Activated CD4-positive, alpha-beta T cell treated with anti-CD3 and anti-CD28 coated beads, Interleukin-2, amount 10 ng/mL, durations not matched to agents 24 days and 14 days (primary cell): ENCODE measurements at regions of chr14 and their contacts with region 1.

Region 1: DNA sequence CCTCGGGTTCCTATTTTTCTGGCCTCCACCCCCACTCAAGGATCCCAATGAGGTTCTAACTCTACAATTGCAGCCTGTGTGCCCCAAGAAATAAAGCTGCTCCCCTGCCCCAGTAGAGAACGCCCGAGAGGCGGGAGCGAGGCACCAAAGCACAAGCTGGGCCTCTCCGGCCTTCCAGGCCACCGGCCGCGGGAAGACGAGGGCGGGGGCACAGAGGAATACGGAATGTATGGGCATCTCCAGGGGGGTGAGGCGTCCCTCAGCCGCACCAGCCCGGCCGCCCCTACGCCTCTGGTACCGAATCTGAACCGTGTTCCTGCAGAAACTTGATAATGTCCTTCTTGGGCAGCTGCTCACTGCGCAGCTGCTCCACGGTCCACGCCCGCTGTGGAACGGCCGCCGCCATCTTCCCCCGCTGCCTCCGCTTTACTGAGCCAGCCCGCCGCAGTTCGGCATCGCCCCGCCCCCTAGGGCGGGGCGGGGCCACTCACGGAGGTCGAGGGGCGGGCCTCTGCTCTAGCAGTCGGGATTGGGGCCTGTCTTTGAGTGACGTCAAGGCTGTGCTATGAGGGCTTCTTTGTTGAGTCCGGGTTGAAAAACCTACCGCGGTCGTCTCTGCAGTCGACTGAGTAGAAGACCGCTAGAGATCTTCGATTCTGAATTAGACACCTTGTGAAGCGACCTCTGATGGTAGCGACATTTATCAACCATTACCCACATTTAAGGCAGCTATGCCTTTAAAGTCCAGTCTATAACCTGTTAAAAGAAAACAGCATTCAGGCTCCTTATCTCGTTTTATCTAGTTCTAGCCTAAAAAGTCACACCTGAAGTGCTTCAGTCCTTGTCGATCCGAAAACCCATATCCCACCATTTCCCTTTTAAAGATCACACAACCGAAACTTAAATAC is at the start of gene FKBP3:
- DNase-seq: peak; percentile 97
- H3K4me3 Mint-ChIP-seq: peak within 1 kb of the TSS; percentile 98
- H3K27ac Mint-ChIP-seq: peak within 1 kb of the TSS; percentile 96
- H3K4me1 Mint-ChIP-seq: peaks cover 30% of the 10 kb centered on the region
- H3K27me3 Mint-ChIP-seq: no peaks in the 10 kb centered on the region
- total RNA-seq, gene FKBP3: 62.4 and 65.4 TPM in 2 replicates

Region 2: DNA sequence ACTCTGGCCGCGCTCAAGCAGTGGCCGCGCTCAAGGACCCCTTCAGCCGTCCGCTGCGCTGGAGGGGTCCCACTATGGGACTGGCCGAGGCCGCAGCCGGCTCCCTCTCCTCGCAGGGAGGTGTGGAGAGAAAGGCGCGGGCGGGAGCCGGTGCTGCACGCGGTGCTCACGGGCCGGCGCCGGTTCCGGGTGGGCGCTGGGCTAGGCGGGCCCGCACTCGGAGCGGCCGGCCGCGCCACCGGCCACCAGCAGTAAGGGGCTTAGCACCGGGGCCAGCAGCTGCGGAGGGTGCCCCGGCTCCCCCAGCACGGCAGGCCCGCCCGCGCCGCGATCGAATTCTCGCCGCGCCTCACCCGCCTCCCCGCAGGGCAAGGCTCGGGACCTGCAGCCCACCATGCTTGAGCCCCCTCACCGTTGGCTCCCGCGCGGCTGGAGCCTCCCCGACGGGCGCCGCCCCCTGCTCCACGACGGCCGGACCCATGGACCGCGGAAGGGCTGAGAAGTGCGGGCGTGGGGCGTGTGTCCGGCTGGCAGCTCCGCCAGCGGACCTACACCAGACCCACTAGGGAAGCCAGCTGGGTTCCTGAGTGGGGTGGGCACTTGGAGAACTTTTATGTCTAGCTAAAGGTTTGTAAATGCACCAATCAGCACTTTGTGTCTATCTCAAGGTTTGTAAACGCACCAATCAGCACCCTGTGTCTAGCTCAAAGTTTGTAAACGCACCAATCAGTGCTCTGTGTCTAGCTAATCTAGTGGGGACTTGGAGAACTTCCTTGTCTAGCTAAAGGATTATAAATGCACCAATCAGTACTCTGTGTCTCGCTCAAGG is 222.1 kb before region 1 on chr14:
- intact Hi-C with region 1: loop called (anchors 5 kb)
- DNase-seq: no peak
- H3K4me3 Mint-ChIP-seq: peak overlapping the region; percentile 31
- H3K27ac Mint-ChIP-seq: no peak overlapping the region
- H3K4me1 Mint-ChIP-seq: no peaks in the 10 kb centered on the region
- H3K27me3 Mint-ChIP-seq: peaks cover 40% of the 10 kb centered on the region

Region 3: DNA sequence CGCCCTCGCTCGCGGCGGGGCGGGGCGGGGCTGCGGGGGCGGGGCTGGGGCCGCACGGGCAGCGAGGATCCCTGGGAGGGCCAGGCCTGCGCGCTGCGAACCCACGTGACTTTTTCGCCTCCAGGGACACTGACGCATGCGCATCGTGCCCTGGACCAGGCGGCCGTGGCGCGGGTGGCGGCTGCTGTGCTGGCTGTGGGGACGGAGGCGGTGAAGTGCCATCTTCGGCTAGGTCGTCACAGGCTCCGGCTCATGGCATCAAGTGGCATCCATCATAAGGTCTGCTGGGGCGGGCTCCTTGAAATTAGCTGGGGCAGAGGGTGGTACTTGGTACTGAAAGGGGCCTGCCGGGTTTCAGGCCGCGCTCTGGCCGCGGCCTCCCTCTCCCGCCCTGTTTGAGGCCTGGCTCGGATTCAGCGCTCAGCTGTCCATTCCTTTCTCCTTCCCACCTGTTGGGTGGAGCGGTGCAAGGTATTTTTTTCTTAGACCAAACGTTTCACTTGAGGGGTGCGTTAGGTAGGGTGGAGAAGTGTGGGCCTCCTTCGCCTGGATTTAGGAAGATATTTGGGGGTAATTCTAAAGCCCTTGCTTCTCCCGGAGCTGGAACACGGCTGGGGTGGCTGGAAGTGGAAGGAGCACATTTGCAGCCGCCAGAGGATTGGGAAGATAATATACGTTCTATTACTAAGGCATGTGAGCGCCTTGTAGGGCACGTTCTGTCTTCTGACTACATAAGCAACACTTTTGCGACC is 50.2 kb before region 1 on chr14 and contains the start of gene PRPF39:
- intact Hi-C with region 1: loop called (anchors 1 kb)
- DNase-seq: peak; percentile 99
- H3K4me3 Mint-ChIP-seq: peak within 1 kb of the TSS; percentile 98
- H3K27ac Mint-ChIP-seq: peak within 1 kb of the TSS; percentile 98
- H3K4me1 Mint-ChIP-seq: peaks cover 35% of the 10 kb centered on the region
- H3K27me3 Mint-ChIP-seq: no peaks in the 10 kb centered on the region
- total RNA-seq, gene PRPF39: 48.1 and 50.5 TPM in 2 replicates

Region 4: DNA sequence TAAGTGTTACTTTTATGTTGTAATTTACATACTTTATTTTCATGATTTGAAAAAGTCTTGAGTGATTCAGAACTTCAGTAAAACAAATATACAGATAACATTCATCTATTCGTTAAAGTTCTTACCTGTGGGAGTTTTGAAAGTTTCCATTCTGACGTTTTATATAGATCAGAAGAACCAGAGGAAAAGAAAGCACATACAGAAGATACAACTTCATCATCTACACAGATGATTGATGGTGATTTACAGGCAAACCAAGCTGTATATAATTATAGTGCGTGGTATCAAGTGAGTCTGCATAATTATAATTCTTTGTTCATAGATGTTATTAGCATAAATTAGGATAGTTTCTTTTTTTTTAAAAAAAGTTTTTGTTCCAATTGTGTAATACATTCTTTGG is 20.0 kb before region 1 on chr14:
- intact Hi-C with region 1: loop called (anchors 1 kb)
- DNase-seq: no peak
- H3K4me3 Mint-ChIP-seq: no peak overlapping the region
- H3K27ac Mint-ChIP-seq: peak overlapping the region; percentile 72
- H3K4me1 Mint-ChIP-seq: peaks cover 10% of the 10 kb centered on the region
- H3K27me3 Mint-ChIP-seq: no peaks in the 10 kb centered on the region

Region 5: GRCh38 chr14:45253068-45253753 is 118.9 kb after region 1 on chr14 and contains the start of gene MIS18BP1:
- intact Hi-C with region 1: loop called (anchors 1 kb)
- DNase-seq: peak; percentile 98
- H3K4me3 Mint-ChIP-seq: peak within 1 kb of the TSS; percentile 96
- H3K27ac Mint-ChIP-seq: peak within 1 kb of the TSS; percentile 99
- H3K4me1 Mint-ChIP-seq: peaks cover 24% of the 10 kb centered on the region
- H3K27me3 Mint-ChIP-seq: peaks cover 2% of the 10 kb centered on the region
- total RNA-seq, gene MIS18BP1: 58.9 and 67.1 TPM in 2 replicates